HAP-1 (cell line): ENCODE measurements at regions of chr6 and their contacts with region 1.

Region 1: GRCh38 chr6:110398778-110399177 is 16.6 kb downstream of the DDO start:
- DNase-seq: no peak
- H3K4me3 ChIP-seq: no peak overlapping the region
- H3K4me1 ChIP-seq: no peaks in the 10 kb centered on the region
- H3K27me3 ChIP-seq: no peaks in the 10 kb centered on the region

Region 2: GRCh38 chr6:109255946-109256640 is 1142.7 kb before region 1 on chr6:
- in situ Hi-C with region 1: no loop called
- DNase-seq: no peak
- H3K4me3 ChIP-seq: no peak overlapping the region
- H3K4me1 ChIP-seq: peaks cover 6% of the 10 kb centered on the region
- H3K27me3 ChIP-seq: peaks cover 5% of the 10 kb centered on the region

Region 3: DNA sequence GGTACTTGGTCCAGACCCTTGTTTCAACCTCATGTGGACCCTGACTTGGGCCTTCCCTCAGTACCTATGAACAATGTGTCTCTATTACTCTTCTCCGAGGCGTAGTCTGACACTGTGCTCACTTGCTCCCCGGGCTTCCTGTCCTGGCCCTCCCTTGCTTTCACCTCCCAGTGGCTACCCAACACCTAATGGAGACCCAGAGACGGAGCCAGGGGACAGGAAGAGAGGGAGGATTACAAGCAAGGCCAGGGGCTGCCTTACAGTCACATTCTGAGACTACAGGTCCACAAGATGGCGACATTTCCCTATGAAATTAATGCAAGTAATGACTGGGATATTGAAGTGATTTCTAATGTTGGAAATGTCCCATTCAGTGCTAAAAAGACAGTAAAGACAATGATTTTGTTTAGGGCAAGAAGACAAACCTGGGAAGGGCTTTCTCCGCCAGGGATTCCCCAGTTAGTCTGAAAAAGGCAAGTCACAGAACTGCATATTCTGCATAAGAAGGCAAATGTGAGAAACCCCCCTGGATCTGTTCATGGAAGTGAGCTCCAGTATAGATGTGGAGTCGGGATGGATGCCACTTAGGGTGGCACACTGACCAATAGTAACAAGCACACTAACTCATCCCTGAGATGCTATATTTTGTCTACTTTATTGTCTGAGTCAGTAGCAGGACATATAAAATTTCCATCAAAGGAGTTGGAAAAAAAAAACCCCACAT is 871.7 kb before region 1 on chr6:
- in situ Hi-C with region 1: loop called (anchors 10 kb)
- DNase-seq: peak; percentile 72
- H3K4me3 ChIP-seq: no peak overlapping the region
- H3K4me1 ChIP-seq: no peaks in the 10 kb centered on the region
- H3K27me3 ChIP-seq: peaks cover 8% of the 10 kb centered on the region

Region 4: GRCh38 chr6:109705258-109705657 is 693.5 kb before region 1 on chr6:
- in situ Hi-C with region 1: loop called (anchors 25 kb)
- DNase-seq: peak; percentile 85 to 89
- H3K4me3 ChIP-seq: no peak overlapping the region
- H3K4me1 ChIP-seq: peaks cover 20% of the 10 kb centered on the region
- H3K27me3 ChIP-seq: no peaks in the 10 kb centered on the region

Region 5: GRCh38 chr6:110053395-110054240 is 345.2 kb before region 1 on chr6:
- in situ Hi-C with region 1: loop called (anchors 25 kb)
- DNase-seq: peak; percentile 47 to 64
- H3K4me3 ChIP-seq: no peak overlapping the region
- H3K4me1 ChIP-seq: no peaks in the 10 kb centered on the region
- H3K27me3 ChIP-seq: peaks cover 13% of the 10 kb centered on the region

Region 6: DNA sequence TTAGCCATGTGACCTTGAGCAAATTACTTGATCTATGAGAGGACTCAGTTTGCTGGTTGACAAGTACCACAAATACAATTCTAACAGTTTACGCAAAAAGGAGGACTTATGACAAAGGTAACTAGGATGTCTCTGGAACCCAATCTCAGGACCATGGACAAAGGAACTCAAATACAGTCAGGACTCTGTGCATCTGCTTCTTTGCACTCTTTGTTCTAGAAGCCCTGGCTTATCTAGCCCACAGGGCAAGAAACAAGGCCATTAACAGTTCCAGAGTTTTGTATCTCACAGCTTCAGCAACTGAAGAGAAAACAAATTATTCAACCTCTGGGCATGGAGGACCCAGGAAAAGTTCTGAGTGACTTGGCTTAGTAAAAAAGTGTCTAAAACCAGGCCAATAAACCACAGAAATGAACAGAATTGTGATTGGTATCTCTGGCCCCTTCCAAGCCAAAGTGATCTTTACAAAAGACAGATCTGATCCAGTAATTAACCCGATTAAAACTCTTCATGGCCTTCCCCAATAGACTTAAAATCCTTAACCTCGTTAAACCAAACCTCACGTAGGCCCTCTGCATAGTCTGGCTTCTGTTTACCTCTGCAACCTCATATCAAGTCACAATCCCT is 225.2 kb before region 1 on chr6:
- in situ Hi-C with region 1: no loop called
- DNase-seq: peak in 1 of 2 experiments; percentile 24
- H3K4me3 ChIP-seq: no peak overlapping the region
- H3K4me1 ChIP-seq: peaks cover 36% of the 10 kb centered on the region
- H3K27me3 ChIP-seq: no peaks in the 10 kb centered on the region